GM23248 (cell line): ENCODE measurements at regions of chr1 and their contacts with region 1.

Region 1: GRCh38 chr1:8554956-8555534 is 237.1 kb downstream of the SLC45A1 start:
- DNase-seq: peak; percentile 36
- H3K4me3 ChIP-seq: no peak overlapping the region
- H3K27ac ChIP-seq: no peak overlapping the region
- H3K4me1 ChIP-seq: no peaks in the 10 kb centered on the region
- H3K27me3 ChIP-seq: no peaks in the 10 kb centered on the region

Region 2: GRCh38 chr1:8598060-8598724 is 43.1 kb after region 1 on chr1:
- in situ Hi-C with region 1: no loop called
- DNase-seq: peak; percentile 84
- H3K4me3 ChIP-seq: peak overlapping the region; percentile 54
- H3K27ac ChIP-seq: peak overlapping the region; percentile 49
- H3K4me1 ChIP-seq: peaks cover 16% of the 10 kb centered on the region
- H3K27me3 ChIP-seq: no peaks in the 10 kb centered on the region

Region 3: GRCh38 chr1:8739377-8739776 is 184.3 kb after region 1 on chr1:
- in situ Hi-C with region 1: loop called (anchors 10 kb)
- DNase-seq: no peak
- H3K4me3 ChIP-seq: no peak overlapping the region
- H3K27ac ChIP-seq: no peak overlapping the region
- H3K4me1 ChIP-seq: peaks cover 10% of the 10 kb centered on the region
- H3K27me3 ChIP-seq: no peaks in the 10 kb centered on the region